ENCODE measurements at regions of chr3 and their contacts with region 1.

Region 1: DNA sequence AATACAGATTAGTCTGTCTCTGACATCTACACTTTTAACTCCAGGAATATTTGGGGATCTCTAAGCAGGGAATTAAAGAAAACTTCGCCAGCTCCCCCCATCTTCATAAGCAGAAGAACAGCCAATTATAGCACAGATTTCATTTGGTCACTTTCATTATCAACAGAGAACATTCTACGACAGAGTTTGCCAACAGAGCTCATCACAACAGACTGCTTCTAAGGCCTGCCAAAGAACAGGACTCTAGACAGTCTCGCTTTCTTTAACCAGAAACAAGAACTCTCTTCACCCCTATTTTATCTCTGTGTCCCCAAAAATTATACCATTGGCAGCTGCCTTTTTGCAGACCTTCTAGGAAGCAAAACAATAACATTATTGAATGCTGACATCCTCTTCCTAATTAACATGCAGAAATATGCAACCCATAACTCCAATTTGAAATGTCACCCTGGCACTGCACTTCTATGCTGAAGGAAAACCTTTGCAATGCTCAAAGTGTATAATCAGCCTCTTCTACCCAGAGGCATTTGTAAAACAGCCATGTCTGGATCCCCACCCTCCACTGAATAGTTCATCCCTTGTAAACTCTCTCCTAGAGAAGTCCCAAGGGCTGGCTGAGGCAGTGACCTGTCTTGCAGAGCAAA is 552.8 kb downstream of the MAGI1 start:
- DNase-seq: no peak
- ATAC-seq: peak; percentile 59 to 74
- H3K4me3 ChIP-seq: no peak overlapping the region
- H3K27ac ChIP-seq: peak overlapping the region; percentile 18
- H3K4me1 ChIP-seq: peaks cover 18% of the 10 kb centered on the region
- H3K27me3 ChIP-seq: no peaks in the 10 kb centered on the region

Region 2: GRCh38 chr3:65548848-65549625 is 63.1 kb after region 1 on chr3:
- intact Hi-C with region 1: loop called in 1 of 4 experiments (anchors 5 kb)
- DNase-seq: peak; percentile 32 to 76 (median 73)
- ATAC-seq: peak; percentile 86 to 92
- H3K4me3 ChIP-seq: peak overlapping the region; percentile 50
- H3K27ac ChIP-seq: no peak overlapping the region
- H3K4me1 ChIP-seq: peaks cover 5% of the 10 kb centered on the region
- H3K27me3 ChIP-seq: no peaks in the 10 kb centered on the region